Left ventricle myocardium superior (tissue), 1 donor: ENCODE measurements at regions of chr5 and their contacts with region 1.

Region 1: GRCh38 chr5:31186672-31187267 is 6.7 kb upstream of the CDH6 start:
- DNase-seq: no peak
- ATAC-seq: no peak

Region 2: GRCh38 chr5:30804739-30805505 is 381.8 kb before region 1 on chr5:
- intact Hi-C with region 1: loop called (anchors 5 kb)
- DNase-seq: no peak
- ATAC-seq: peak; percentile 69

Region 3: DNA sequence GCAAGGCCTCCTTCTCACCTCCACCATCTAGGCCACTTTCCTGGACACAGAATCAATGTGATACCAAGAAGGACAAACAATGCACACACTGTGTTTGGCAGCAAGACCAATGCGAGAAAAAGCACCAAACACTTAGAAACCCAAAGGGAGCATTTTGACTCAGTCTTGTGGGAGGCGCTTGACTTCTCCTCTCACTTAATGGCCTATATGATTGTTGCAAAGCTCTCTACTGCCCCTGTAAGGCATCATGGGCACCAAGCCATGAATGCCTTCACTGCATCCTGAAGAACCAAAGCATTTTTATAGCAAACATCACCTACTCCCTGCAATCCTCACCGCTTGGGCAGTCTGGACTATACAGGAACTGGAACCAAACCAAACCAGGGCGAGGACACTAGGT is 64.3 kb after region 1 on chr5:
- intact Hi-C with region 1: no loop called
- DNase-seq: no peak
- ATAC-seq: no peak

Region 4: DNA sequence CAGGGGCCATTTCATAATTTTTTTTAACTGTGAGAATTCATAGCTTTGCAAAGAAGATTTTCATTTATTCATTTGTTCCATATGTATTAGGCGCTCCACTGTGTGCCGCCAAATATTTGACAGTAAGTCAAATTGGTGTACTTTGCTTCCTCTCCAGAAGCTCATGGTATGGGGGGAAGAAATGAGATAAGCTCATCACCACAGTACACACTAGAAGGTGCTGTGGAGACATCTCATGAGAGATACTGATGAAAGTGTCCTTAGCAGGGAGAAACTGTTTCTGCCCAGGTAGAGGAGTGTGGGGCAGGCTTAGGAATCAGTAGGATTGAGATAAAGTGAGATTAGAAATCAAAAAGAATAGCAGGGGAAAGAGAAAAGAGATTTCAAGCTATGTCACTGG is 142.9 kb after region 1 on chr5:
- intact Hi-C with region 1: no loop called
- DNase-seq: no peak
- ATAC-seq: no peak

Region 5: GRCh38 chr5:31581498-31582099 is 394.8 kb after region 1 on chr5:
- intact Hi-C with region 1: no loop called
- DNase-seq: no peak
- ATAC-seq: peak; percentile 41